ENCODE measurements at regions of chr10 and their contacts with region 1.

Region 1: GRCh38 chr10:30488316-30488715 is 54.3 kb downstream of the MAP3K8 start:
- DNase-seq: peak; percentile 71
- ATAC-seq: peak; percentile 72
- H3K4me3 ChIP-seq: peak overlapping the region in 4 of 5 experiments; percentile 5 to 46 (median 32)
- H3K4me3 Mint-ChIP-seq: peak overlapping the region; percentile 56
- H3K27ac ChIP-seq: peak overlapping the region; percentile 70 to 88
- H3K27ac Mint-ChIP-seq: peak overlapping the region; percentile 87
- H3K4me1 ChIP-seq: peaks cover 62 to 70% of the 10 kb centered on the region in 2 donors
- H3K4me1 Mint-ChIP-seq: peaks cover 60% of the 10 kb centered on the region
- H3K27me3 ChIP-seq: no peaks in the 10 kb centered on the region
- H3K27me3 Mint-ChIP-seq: no peaks in the 10 kb centered on the region
- CTCF ChIP-seq: no peak

Region 2: DNA sequence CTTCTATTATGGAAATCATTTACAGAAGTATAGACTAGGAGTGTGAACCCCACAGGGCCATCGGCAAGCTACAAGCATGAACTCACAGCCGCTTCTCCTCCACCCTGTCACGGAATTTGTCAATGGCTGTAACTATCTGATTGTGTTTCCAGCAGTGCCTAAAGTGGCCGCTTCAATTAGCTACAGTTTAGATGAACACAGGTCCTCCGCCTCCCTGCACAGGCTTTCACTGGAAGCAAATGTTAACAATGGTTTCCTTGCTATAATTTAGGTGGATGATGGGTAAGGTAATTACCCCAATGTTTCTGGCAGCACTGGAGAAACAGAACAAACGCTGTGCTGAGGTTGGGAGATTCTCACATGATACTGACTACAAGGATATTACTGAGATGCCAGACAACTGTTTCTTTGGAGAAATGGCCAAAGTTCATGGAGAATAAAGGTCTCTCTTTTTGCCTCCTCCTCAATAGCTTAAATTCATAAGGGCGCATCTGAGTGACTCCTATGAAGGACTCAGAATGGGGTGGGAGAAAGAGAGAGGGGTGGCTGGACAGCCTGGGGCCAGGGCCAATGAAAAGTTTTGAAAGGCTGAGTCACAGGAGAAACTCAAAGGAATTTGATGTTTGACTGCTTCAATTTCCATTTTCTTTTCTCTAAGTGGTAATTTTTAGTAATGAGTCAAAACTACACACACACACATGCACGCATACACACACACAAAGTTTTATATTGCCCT is 932.4 kb before region 1 on chr10:
- CTCF ChIA-PET with region 1: no interaction called
- POLR2A ChIA-PET with region 1: no interaction called
- intact Hi-C with region 1: no loop called
- DNase-seq: no peak
- ATAC-seq: no peak
- H3K4me3 ChIP-seq: no peak overlapping the region
- H3K4me3 Mint-ChIP-seq: no peak overlapping the region
- H3K27ac ChIP-seq: no peak overlapping the region
- H3K27ac Mint-ChIP-seq: no peak overlapping the region
- H3K4me1 ChIP-seq: no peaks in the 10 kb centered on the region
- H3K4me1 Mint-ChIP-seq: no peaks in the 10 kb centered on the region
- H3K27me3 ChIP-seq: no peaks in the 10 kb centered on the region
- H3K27me3 Mint-ChIP-seq: no peaks in the 10 kb centered on the region
- CTCF ChIP-seq: no peak

Region 3: DNA sequence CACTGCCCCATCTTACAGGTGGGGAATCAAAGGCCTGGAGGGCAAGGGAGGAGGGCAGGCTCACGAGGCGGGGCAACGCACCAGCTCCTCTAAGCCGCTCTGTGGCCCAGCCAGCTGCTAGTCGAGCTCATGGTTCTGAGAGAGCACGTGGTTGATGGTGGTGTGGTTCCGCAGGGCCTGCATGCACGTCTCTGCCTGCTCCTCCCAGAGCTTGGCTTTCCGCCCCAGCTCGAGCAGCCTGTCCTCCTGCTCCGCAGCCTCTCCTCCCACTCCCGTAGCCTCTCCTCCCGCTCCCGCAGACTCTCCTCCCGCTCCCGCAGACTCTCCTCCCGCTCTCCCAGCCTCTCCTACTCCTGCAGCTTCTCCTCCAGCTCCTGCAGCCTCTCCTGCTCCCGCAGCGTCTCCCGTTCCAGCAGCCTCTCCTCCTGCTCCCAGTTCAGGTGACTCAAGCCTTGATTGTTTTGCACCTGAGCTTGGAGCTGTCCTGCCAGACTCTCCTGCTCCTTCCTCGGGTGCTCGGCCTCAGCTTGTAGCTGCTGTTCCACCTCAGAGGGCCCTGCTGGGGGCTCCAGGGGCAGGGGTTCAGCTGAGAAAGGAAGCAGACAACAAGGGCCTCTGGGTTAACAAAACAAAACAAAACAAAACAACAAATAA is 120.1 kb before region 1 on chr10:
- CTCF ChIA-PET with region 1: no interaction called
- POLR2A ChIA-PET with region 1: no interaction called
- intact Hi-C with region 1: no loop called
- DNase-seq: no peak
- ATAC-seq: no peak
- H3K4me3 ChIP-seq: no peak overlapping the region
- H3K4me3 Mint-ChIP-seq: no peak overlapping the region
- H3K27ac ChIP-seq: no peak overlapping the region
- H3K27ac Mint-ChIP-seq: no peak overlapping the region
- H3K4me1 ChIP-seq: no peaks in the 10 kb centered on the region
- H3K4me1 Mint-ChIP-seq: no peaks in the 10 kb centered on the region
- H3K27me3 ChIP-seq: no peaks in the 10 kb centered on the region
- H3K27me3 Mint-ChIP-seq: peaks cover 17% of the 10 kb centered on the region
- CTCF ChIP-seq: no peak

Region 4: DNA sequence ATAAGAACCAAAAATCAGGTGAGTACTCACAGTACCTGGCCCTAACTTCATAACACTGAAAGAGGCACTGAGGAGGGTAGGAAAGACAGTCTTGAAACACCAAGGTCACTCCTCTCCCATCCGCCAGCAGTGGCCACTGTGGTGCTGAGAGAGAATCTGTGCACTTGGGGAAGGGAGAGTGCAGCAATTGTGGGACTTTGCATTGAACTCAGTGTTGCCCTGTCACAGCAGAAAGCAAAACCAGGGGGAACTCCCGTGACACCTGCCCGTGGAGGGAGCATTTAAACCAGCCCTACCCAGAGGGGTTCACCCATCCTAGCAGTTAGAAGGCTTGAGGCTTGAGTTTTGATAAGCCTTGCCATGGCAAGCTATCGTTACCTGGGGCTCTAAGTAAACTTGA is 89.5 kb before region 1 on chr10:
- CTCF ChIA-PET with region 1: no interaction called
- POLR2A ChIA-PET with region 1: no interaction called
- intact Hi-C with region 1: no loop called
- DNase-seq: no peak
- ATAC-seq: no peak
- H3K4me3 ChIP-seq: no peak overlapping the region
- H3K4me3 Mint-ChIP-seq: no peak overlapping the region
- H3K27ac ChIP-seq: no peak overlapping the region
- H3K27ac Mint-ChIP-seq: no peak overlapping the region
- H3K4me1 ChIP-seq: no peaks in the 10 kb centered on the region
- H3K4me1 Mint-ChIP-seq: no peaks in the 10 kb centered on the region
- H3K27me3 ChIP-seq: no peaks in the 10 kb centered on the region
- H3K27me3 Mint-ChIP-seq: peaks cover 10% of the 10 kb centered on the region
- CTCF ChIP-seq: no peak

Region 5: DNA sequence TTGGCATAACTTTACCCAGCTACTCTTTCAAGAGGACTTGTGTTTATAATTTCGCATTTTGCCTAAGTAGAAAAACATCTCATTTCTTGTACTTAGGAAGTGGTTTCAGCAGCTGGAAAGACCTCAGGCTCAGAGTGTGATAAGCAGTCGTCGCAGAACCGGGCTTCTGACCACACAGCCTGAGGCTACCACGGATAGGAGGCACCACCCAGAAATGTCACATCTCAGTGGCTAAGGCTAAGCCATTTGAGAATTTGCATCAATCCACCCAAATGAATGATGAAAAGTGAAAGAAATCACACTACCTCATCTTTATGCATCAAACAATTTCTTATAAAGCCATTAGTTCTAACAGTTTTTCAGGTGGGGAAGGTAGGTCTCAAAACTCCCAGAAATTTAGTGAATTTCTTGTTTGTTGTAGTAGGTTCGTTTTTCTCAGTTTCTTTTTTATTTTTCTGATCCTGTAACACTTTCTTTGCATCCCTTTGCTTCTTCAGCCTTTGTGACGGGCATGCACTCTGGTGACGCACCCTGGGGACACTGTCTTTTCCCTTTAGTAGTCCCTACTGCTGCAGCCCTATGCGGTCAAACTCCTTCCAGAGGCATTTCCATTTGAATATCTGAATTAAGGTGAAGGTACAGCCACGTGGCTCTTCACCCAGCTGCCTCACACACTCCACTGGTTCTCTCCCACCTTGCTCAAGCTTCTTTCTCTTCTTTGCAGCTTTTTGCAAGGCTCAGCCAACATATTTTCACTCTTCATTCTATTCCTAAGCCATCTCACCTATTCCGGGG is 14.1 kb after region 1 on chr10:
- CTCF ChIA-PET with region 1: interaction called, 9 read pairs
- POLR2A ChIA-PET with region 1: interaction called, 6 read pairs
- intact Hi-C with region 1: loop called (anchors 2 kb)
- DNase-seq: peak; percentile 77
- ATAC-seq: peak; percentile 90
- H3K4me3 ChIP-seq: peak overlapping the region; percentile 5 to 51 (median 29)
- H3K4me3 Mint-ChIP-seq: peak overlapping the region; percentile 80
- H3K27ac ChIP-seq: peak overlapping the region; percentile 84 to 88
- H3K27ac Mint-ChIP-seq: peak overlapping the region; percentile 89
- H3K4me1 ChIP-seq: peaks cover 83 to 84% of the 10 kb centered on the region in 2 donors
- H3K4me1 Mint-ChIP-seq: peaks cover 84% of the 10 kb centered on the region
- H3K27me3 ChIP-seq: no peaks in the 10 kb centered on the region
- H3K27me3 Mint-ChIP-seq: no peaks in the 10 kb centered on the region
- CTCF ChIP-seq: no peak

Region 6: GRCh38 chr10:30510169-30510930 is 22.0 kb after region 1 on chr10:
- CTCF ChIA-PET with region 1: interaction called, 9 read pairs
- POLR2A ChIA-PET with region 1: interaction called, 6 read pairs
- intact Hi-C with region 1: loop called (anchors 2 kb)
- DNase-seq: no peak
- ATAC-seq: peak; percentile 84
- H3K4me3 ChIP-seq: no peak overlapping the region
- H3K4me3 Mint-ChIP-seq: peak overlapping the region; percentile 23
- H3K27ac ChIP-seq: no peak overlapping the region
- H3K27ac Mint-ChIP-seq: peak overlapping the region; percentile 66
- H3K4me1 ChIP-seq: peaks cover 22 to 24% of the 10 kb centered on the region in 2 donors
- H3K4me1 Mint-ChIP-seq: peaks cover 39% of the 10 kb centered on the region
- H3K27me3 ChIP-seq: no peaks in the 10 kb centered on the region
- H3K27me3 Mint-ChIP-seq: no peaks in the 10 kb centered on the region
- CTCF ChIP-seq: no peak